ENCODE measurements at regions of chr11 and their contacts with region 1.

Region 1: DNA sequence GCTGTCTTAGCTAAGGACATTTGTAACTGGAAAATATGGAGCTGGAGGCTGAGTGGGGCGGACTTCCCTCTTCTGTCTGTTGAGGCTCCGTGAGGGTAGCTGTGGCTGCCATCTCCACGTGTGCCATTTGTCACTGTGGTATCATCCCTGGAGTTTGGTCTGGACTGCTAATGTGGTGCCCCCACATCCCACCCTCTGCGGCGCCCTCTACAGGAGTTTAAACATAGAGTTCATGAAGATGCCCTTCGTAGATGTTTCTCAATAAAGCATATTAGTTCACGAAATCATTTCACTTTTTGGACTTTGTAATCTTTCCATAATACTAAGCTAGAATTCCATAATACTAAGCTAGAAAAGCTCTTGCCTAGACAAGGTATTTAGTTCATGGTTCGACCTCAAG is 52.4 kb downstream of the TECTA start:
- DNase-seq: no peak
- H3K4me3 ChIP-seq: no peak overlapping the region
- H3K27ac ChIP-seq: no peak overlapping the region
- H3K4me1 ChIP-seq: no peaks in the 10 kb centered on the region
- H3K27me3 ChIP-seq: no peaks in the 10 kb centered on the region
- CTCF ChIP-seq: no peak
- EP300 ChIP-seq: no peak
- POLR2A ChIP-seq: no peak

Region 2: GRCh38 chr11:121249039-121249663 is 95.7 kb after region 1 on chr11:
- in situ Hi-C with region 1: loop called in 1 of 4 experiments (anchors 25 kb)
- intact Hi-C with region 1: no loop called
- DNase-seq: no peak
- H3K4me3 ChIP-seq: no peak overlapping the region
- H3K27ac ChIP-seq: no peak overlapping the region
- H3K4me1 ChIP-seq: peaks cover 0 to 4% (median 2%) of the 10 kb centered on the region in 4 donors
- H3K27me3 ChIP-seq: peaks cover 5% of the 10 kb centered on the region
- CTCF ChIP-seq: peak; percentile 67 to 83 (median 80)
- EP300 ChIP-seq: no peak
- POLR2A ChIP-seq: no peak

Region 3: GRCh38 chr11:122938557-122938956 is 1785.1 kb after region 1 on chr11:
- in situ Hi-C with region 1: no loop called
- intact Hi-C with region 1: no loop called
- DNase-seq: no peak
- H3K4me3 ChIP-seq: no peak overlapping the region
- H3K27ac ChIP-seq: no peak overlapping the region
- H3K4me1 ChIP-seq: no peaks in the 10 kb centered on the region
- H3K27me3 ChIP-seq: no peaks in the 10 kb centered on the region
- CTCF ChIP-seq: no peak
- EP300 ChIP-seq: no peak
- POLR2A ChIP-seq: no peak